ENCODE measurements at regions of chr18 and their contacts with region 1.

Region 1: DNA sequence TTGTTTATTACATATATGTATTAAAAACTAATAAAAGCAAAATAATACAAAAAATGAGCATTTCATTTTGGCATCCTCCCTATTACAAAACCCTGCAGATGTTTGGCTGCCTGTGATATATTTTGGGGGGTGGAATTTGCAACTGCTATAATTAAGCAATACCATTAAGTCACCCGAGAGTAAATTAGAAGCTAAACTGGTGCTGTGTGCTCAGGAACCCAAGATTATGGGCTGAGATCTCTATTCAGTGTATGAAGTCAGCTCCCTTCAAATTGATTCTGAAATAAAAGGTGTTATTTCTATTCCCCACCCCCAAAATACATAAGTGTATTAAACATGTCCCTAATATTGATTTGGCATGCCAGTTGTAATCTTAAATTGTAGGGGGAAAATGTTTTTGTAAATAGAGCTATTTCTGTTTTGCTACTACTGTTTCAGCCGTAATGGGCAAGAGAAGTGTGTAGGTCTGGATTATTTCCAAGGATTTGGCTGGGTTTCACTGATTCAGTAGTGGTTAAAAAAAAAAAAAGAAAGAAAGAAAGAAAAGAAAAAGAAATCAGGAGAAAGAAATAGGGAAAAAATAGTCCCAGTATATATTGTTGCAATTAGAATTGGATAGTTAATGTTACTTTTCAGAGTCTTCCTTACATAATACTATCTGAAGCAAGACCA is 110.9 kb downstream of the SS18 start:
- DNase-seq: no peak
- H3K4me3 ChIP-seq: no peak overlapping the region
- H3K27ac ChIP-seq: no peak overlapping the region
- H3K4me1 ChIP-seq: no peaks in the 10 kb centered on the region
- H3K27me3 ChIP-seq: no peaks in the 10 kb centered on the region
- CTCF ChIP-seq: no peak

Region 2: GRCh38 chr18:26040051-26040656 is 60.6 kb after region 1 on chr18:
- CTCF ChIA-PET with region 1: no interaction called
- POLR2A ChIA-PET with region 1: no interaction called
- intact Hi-C with region 1: loop called (anchors 10 kb)
- DNase-seq: no peak
- H3K4me3 ChIP-seq: no peak overlapping the region
- H3K27ac ChIP-seq: no peak overlapping the region
- H3K4me1 ChIP-seq: no peaks in the 10 kb centered on the region
- H3K27me3 ChIP-seq: no peaks in the 10 kb centered on the region
- CTCF ChIP-seq: no peak

Region 3: GRCh38 chr18:26121476-26121875 is 142.0 kb after region 1 on chr18:
- CTCF ChIA-PET with region 1: no interaction called
- POLR2A ChIA-PET with region 1: no interaction called
- intact Hi-C with region 1: no loop called
- DNase-seq: no peak
- H3K4me3 ChIP-seq: no peak overlapping the region
- H3K27ac ChIP-seq: no peak overlapping the region
- H3K4me1 ChIP-seq: no peaks in the 10 kb centered on the region
- H3K27me3 ChIP-seq: no peaks in the 10 kb centered on the region
- CTCF ChIP-seq: no peak

Region 4: GRCh38 chr18:26159353-26159752 is 179.8 kb after region 1 on chr18:
- CTCF ChIA-PET with region 1: no interaction called
- POLR2A ChIA-PET with region 1: no interaction called
- intact Hi-C with region 1: no loop called
- DNase-seq: peak; percentile 6
- H3K4me3 ChIP-seq: no peak overlapping the region
- H3K27ac ChIP-seq: no peak overlapping the region
- H3K4me1 ChIP-seq: no peaks in the 10 kb centered on the region
- H3K27me3 ChIP-seq: no peaks in the 10 kb centered on the region
- CTCF ChIP-seq: peak; percentile 50; the same call in 1 of the 2 replicates

Measured in A673 (cell line).